ENCODE measurements at regions of chr3 and their contacts with region 1.

Region 1: DNA sequence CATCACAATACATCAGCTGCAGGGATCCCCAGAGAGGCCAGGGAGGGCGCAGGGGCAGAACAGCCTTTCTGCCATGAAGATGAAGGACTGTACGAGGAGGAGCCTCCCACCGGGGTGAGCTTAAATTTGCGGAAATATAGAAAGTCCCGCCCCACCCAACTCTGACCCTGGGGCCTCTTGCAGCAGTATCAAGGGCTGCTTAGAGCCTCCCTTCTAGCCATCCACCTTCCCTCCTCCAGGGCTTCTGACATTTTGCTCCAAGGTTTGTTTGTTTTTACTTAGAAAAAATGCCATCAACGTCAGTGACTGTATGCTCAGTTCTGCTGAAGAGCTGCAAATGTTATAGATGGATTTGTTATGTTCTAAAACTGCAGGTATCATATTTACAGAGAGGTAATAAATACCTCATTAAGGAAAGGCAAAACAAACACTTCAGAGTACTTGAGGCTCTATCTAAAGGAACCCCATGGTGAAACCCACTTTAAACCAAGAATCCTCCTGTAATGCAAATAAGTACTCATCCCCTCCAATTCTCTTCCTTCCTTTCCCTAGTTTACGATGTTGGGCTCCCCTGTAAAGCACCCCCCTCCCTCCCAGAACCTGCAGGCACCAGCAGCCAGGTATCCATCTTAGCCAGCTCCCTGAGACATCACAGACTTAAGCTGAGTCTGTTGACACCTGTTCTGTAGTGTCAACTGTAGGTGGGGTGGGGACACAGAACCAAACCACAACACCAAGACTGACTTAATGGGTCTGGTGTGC is 30.5 kb downstream of the RFTN1 start:
- DNase-seq: no peak
- ATAC-seq: peak; percentile 94
- H3K4me3 ChIP-seq: no peak overlapping the region
- H3K27ac ChIP-seq: peak overlapping the region; percentile 39; the same call in 1 of the 2 replicates
- H3K4me1 ChIP-seq: peaks cover 30% of the 10 kb centered on the region
- H3K27me3 ChIP-seq: no peaks in the 10 kb centered on the region
- CTCF ChIP-seq: no peak
- EP300 ChIP-seq: no peak
- POLR2A ChIP-seq: no peak
- RAD21 ChIP-seq: 0 out of 2 replicates have a peak, but pooled peaks have one; percentile 1

Region 2: GRCh38 chr3:16329036-16329825 is 153.7 kb before region 1 on chr3:
- CTCF ChIA-PET with region 1: no interaction called
- POLR2A ChIA-PET with region 1: no interaction called
- RAD21 ChIA-PET with region 1: no interaction called
- SMC1A ChIA-PET with region 1: no interaction called
- in situ Hi-C with region 1: no loop called
- intact Hi-C with region 1: no loop called
- DNase-seq: no peak
- ATAC-seq: no peak
- H3K4me3 ChIP-seq: no peak overlapping the region
- H3K27ac ChIP-seq: no peak overlapping the region
- H3K4me1 ChIP-seq: no peaks in the 10 kb centered on the region
- H3K27me3 ChIP-seq: no peaks in the 10 kb centered on the region
- CTCF ChIP-seq: no peak
- EP300 ChIP-seq: no peak
- POLR2A ChIP-seq: peak; percentile 43; the same call in 1 of the 2 replicates
- RAD21 ChIP-seq: no peak

Region 3: GRCh38 chr3:16467393-16467792 is 15.6 kb before region 1 on chr3:
- CTCF ChIA-PET with region 1: interaction called, 4 read pairs
- POLR2A ChIA-PET with region 1: interaction called, 14 read pairs
- RAD21 ChIA-PET with region 1: interaction called, 5 read pairs
- SMC1A ChIA-PET with region 1: interaction called, 23 read pairs
- in situ Hi-C with region 1: no loop called
- intact Hi-C with region 1: no loop called
- DNase-seq: peak; percentile 28
- ATAC-seq: peak; percentile 93
- H3K4me3 ChIP-seq: no peak overlapping the region
- H3K27ac ChIP-seq: peak overlapping the region; percentile 53
- H3K4me1 ChIP-seq: peaks cover 28% of the 10 kb centered on the region
- H3K27me3 ChIP-seq: no peaks in the 10 kb centered on the region
- CTCF ChIP-seq: no peak
- EP300 ChIP-seq: no peak
- POLR2A ChIP-seq: peak; percentile 49; the same call in 1 of the 2 replicates
- RAD21 ChIP-seq: no peak

Region 4: DNA sequence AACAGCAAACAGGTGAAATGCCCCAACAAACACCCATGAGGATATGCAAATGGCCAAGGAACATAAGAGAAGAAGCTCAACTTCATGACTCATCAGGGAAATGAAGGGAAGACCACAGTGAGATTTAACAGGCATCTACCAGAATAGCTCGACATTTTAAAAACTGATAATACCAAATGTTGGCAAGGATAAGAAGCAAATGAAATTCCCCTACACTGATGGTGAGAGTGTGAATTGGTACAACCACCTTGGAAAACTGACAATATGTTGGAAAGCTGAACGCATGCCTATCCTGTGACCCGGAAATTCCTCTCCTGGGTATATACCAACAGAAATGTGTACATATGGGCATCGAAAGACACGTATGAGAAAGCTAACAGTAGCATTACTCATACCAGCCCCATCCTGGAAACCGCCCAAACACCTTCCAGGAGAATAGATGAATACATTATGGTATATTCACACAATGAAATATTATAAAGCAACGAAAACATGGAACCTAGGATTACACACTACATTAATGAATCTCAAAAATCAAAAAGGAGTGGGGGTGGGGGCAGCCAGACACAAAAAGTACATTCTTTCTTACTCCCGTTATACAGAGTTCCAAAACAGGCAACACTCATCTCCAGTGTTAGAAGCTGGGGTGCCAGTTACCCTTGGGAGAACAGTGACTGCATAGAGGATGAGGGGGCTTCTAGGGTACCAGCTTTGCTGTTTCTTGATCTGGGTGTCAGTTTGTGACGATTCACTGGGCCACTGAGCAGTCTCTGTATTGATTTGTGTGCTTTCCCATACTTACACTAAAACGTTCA is 13.7 kb after region 1 on chr3:
- CTCF ChIA-PET with region 1: interaction called, 29 read pairs
- POLR2A ChIA-PET with region 1: interaction called, 47 read pairs
- RAD21 ChIA-PET with region 1: interaction called, 50 read pairs
- SMC1A ChIA-PET with region 1: interaction called, 295 read pairs
- in situ Hi-C with region 1: no loop called
- intact Hi-C with region 1: no loop called
- DNase-seq: peak; percentile 60
- ATAC-seq: peak; percentile 73
- H3K4me3 ChIP-seq: no peak overlapping the region
- H3K27ac ChIP-seq: peak overlapping the region; percentile 29; the same call in 1 of the 2 replicates
- H3K4me1 ChIP-seq: peaks cover 48% of the 10 kb centered on the region
- H3K27me3 ChIP-seq: no peaks in the 10 kb centered on the region
- CTCF ChIP-seq: no peak
- EP300 ChIP-seq: no peak
- POLR2A ChIP-seq: no peak
- RAD21 ChIP-seq: no peak

Region 5: DNA sequence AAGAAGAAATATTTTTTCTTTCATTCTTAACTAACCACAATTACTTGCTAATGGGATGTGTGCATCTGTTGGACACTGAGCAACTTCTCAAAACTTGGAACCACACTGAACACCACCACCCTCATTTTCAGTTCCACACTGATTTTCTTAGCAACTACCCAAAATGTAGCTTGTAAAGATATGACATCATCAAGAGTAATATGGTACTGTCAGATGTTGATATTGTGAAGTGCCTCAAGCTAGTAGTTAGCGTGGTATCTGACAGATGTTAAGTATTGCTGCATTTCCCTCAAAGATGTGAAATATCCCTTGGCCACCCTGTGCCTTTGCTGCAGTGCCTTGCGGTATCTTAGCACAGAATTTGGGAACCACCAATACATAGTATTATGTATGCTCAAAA is 21.3 kb after region 1 on chr3:
- CTCF ChIA-PET with region 1: interaction called, 11 read pairs
- POLR2A ChIA-PET with region 1: interaction called, 18 read pairs
- RAD21 ChIA-PET with region 1: interaction called, 50 read pairs
- SMC1A ChIA-PET with region 1: interaction called, 295 read pairs
- in situ Hi-C with region 1: no loop called
- intact Hi-C with region 1: no loop called
- DNase-seq: peak; percentile 96
- ATAC-seq: peak; percentile 73
- H3K4me3 ChIP-seq: no peak overlapping the region
- H3K27ac ChIP-seq: peak overlapping the region; percentile 60
- H3K4me1 ChIP-seq: peaks cover 61% of the 10 kb centered on the region
- H3K27me3 ChIP-seq: no peaks in the 10 kb centered on the region
- CTCF ChIP-seq: no peak
- EP300 ChIP-seq: peak; percentile 91 to 92
- POLR2A ChIP-seq: no peak
- RAD21 ChIP-seq: no peak

Region 6: GRCh38 chr3:18258492-18258891 is 1775.5 kb after region 1 on chr3:
- CTCF ChIA-PET with region 1: no interaction called
- POLR2A ChIA-PET with region 1: no interaction called
- RAD21 ChIA-PET with region 1: no interaction called
- SMC1A ChIA-PET with region 1: no interaction called
- in situ Hi-C with region 1: no loop called
- intact Hi-C with region 1: no loop called
- DNase-seq: no peak
- ATAC-seq: peak; percentile 72
- H3K4me3 ChIP-seq: no peak overlapping the region
- H3K27ac ChIP-seq: no peak overlapping the region
- H3K4me1 ChIP-seq: no peaks in the 10 kb centered on the region
- H3K27me3 ChIP-seq: no peaks in the 10 kb centered on the region
- CTCF ChIP-seq: no peak
- EP300 ChIP-seq: no peak
- POLR2A ChIP-seq: no peak
- RAD21 ChIP-seq: no peak

Measured in GM12878 (cell line).